PC-9 (cell line): ENCODE measurements at regions of chr2 and their contacts with region 1.

Region 1: DNA sequence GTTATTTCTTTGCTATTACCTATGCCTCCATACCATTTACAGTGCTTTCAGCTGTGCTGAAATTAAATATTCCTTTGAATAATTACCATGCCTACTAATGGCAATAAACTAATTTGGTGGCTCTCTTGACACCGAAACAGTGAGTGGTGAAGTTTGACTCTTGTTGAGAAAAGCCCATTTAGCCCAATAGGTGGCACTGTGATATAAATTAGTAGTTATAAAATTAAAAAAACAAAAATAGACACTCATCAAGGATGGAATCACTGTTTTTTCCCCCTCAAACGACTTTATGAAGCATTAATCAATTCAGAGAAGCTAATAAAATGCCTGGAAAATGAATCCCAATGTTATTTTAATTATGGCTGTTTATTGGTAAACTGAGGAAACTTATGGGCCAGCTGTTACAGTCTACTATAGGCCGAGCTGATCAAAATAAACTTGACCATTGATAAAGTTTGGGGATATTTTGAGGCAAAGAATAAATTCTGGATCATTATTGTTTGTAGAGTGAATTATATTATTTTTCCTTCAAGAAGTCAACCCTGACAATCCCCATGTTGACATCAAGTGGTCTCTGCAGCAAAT is 339.6 kb downstream of the TRIB2 start:
- DNase-seq: no peak
- H3K4me3 ChIP-seq: no peak overlapping the region
- H3K27ac ChIP-seq: no peak overlapping the region
- H3K4me1 ChIP-seq: no peaks in the 10 kb centered on the region
- H3K27me3 ChIP-seq: no peaks in the 10 kb centered on the region
- CTCF ChIP-seq: peak; percentile 80

Region 2: DNA sequence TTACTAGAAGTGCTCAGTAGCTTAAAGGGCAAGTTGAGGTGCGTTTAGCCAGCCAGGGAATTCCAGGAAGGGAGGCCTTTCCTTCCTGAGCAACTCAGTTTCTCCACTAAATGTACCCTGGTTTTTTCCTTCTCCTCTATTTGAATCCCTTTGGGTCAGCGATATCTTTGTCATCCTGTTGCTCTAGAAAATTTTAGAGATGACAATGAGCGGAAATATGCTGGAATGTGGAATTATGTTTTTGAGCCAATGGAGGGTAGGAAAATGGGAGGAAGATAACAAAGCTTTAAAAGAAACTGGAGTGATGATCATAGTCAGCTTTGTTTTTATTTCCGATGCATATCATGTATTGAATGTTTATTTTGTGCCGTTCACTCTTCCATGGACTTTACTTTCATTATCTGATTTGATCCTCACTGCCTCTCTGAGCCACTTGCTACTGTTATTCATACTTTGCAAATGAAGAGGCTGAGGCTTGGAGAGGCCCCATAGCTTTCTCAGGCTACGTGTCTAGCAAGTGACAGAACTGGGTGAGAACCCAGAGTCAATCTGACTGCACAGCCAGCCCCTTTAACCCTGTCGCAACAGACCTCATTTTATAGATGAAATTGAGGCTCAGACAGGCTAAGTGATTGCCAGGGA is 1453.7 kb before region 1 on chr2:
- CTCF ChIA-PET with region 1: interaction called, 14 read pairs
- POLR2A ChIA-PET with region 1: no interaction called
- intact Hi-C with region 1: no loop called
- DNase-seq: no peak
- H3K4me3 ChIP-seq: no peak overlapping the region
- H3K27ac ChIP-seq: no peak overlapping the region
- H3K4me1 ChIP-seq: peaks cover 9% of the 10 kb centered on the region
- H3K27me3 ChIP-seq: peaks cover 59% of the 10 kb centered on the region
- CTCF ChIP-seq: no peak

Region 3: GRCh38 chr2:13230221-13230620 is 173.9 kb after region 1 on chr2:
- CTCF ChIA-PET with region 1: no interaction called
- POLR2A ChIA-PET with region 1: no interaction called
- intact Hi-C with region 1: no loop called
- DNase-seq: no peak
- H3K4me3 ChIP-seq: no peak overlapping the region
- H3K27ac ChIP-seq: no peak overlapping the region
- H3K4me1 ChIP-seq: no peaks in the 10 kb centered on the region
- H3K27me3 ChIP-seq: no peaks in the 10 kb centered on the region
- CTCF ChIP-seq: no peak